Tibial artery (tissue), 4 donors: ENCODE measurements at regions of chr10 and their contacts with region 1.

Region 1: GRCh38 chr10:43965033-43965917 is 316.6 kb upstream of the ZNF32 start:
- DNase-seq: peak; percentile 56 to 81
- H3K4me3 ChIP-seq: no peak overlapping the region
- H3K27ac ChIP-seq: peak overlapping the region; percentile 70 to 76
- H3K4me1 ChIP-seq: peaks cover 5 to 63% (median 52%) of the 10 kb centered on the region in 4 donors
- H3K27me3 ChIP-seq: no peaks in the 10 kb centered on the region
- CTCF ChIP-seq: peak in 1 of 2 experiments; percentile 4

Region 2: GRCh38 chr10:43824934-43825333 is 140.3 kb before region 1 on chr10:
- intact Hi-C with region 1: loop called (anchors 10 kb)
- DNase-seq: peak; percentile 85 to 91
- H3K4me3 ChIP-seq: no peak overlapping the region
- H3K27ac ChIP-seq: peak overlapping the region; percentile 87 to 91
- H3K4me1 ChIP-seq: peaks cover 0 to 72% (median 55%) of the 10 kb centered on the region in 4 donors
- H3K27me3 ChIP-seq: no peaks in the 10 kb centered on the region
- CTCF ChIP-seq: no peak

Region 3: GRCh38 chr10:44010873-44011602 is 45.8 kb after region 1 on chr10:
- intact Hi-C with region 1: loop called (anchors 10 kb)
- DNase-seq: no peak
- H3K4me3 ChIP-seq: no peak overlapping the region
- H3K27ac ChIP-seq: peak overlapping the region; percentile 65 to 71
- H3K4me1 ChIP-seq: peaks cover 0 to 57% (median 42%) of the 10 kb centered on the region in 4 donors
- H3K27me3 ChIP-seq: no peaks in the 10 kb centered on the region
- CTCF ChIP-seq: no peak